CD8-positive, alpha-beta T cell (primary cell): ENCODE measurements at regions of chr21 and their contacts with region 1.

Region 1: DNA sequence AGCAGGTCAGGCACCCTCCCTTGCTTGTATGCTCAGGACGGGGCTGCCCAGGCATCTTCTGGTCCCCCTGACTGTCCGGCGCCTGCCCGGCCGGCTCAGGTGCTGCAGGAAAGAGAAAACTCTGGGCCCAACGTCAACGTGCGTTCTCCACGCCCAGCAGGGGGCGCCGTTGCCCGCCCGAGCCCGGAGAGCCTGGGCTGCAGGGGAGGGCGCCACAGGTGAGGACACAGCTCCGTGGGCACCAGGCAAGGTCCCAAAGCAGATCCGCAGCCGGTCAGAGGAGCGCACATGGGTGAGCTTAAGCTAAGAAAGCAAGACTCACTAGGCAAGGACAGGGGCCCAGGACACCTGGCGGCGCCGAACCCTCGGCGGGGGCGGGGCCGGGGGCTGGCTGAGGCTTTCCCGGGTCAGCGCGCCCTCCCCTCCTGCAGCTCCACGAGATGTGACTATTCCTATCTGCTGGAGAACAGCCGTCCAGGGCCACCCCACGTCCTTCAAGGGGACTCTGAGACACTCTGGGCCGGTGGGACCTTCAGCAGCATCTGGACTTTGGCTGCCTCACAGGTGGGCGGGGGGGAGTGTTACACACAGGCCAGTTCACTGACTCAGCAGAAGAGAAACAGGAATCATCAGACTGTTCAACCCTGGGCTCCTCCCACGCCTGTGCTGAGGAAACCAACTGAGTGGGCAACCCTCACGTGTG is 29.3 kb downstream of the KRTAP10-1 start:
- DNase-seq: peak; percentile 66 to 94 (median 81)
- ATAC-seq: peak; percentile 95
- H3K4me3 ChIP-seq: peak overlapping the region; percentile 41 to 45
- H3K4me3 Mint-ChIP-seq: peak overlapping the region; percentile 60
- H3K27ac ChIP-seq: no peak overlapping the region
- H3K27ac Mint-ChIP-seq: no peak overlapping the region
- H3K4me1 ChIP-seq: peaks cover 11% of the 10 kb centered on the region
- H3K4me1 Mint-ChIP-seq: peaks cover 4% of the 10 kb centered on the region
- H3K27me3 ChIP-seq: no peaks in the 10 kb centered on the region
- H3K27me3 Mint-ChIP-seq: no peaks in the 10 kb centered on the region
- CTCF ChIP-seq: peak; percentile 93

Region 2: GRCh38 chr21:44377201-44377921 is 133.3 kb before region 1 on chr21:
- CTCF ChIA-PET with region 1: no interaction called
- POLR2A ChIA-PET with region 1: no interaction called
- intact Hi-C with region 1: no loop called
- DNase-seq: no peak
- ATAC-seq: no peak
- H3K4me3 ChIP-seq: no peak overlapping the region
- H3K4me3 Mint-ChIP-seq: no peak overlapping the region
- H3K27ac ChIP-seq: no peak overlapping the region
- H3K27ac Mint-ChIP-seq: no peak overlapping the region
- H3K4me1 ChIP-seq: peaks cover 23% of the 10 kb centered on the region
- H3K4me1 Mint-ChIP-seq: peaks cover 24% of the 10 kb centered on the region
- H3K27me3 ChIP-seq: no peaks in the 10 kb centered on the region
- H3K27me3 Mint-ChIP-seq: no peaks in the 10 kb centered on the region
- CTCF ChIP-seq: no peak

Region 3: GRCh38 chr21:44485254-44485793 is 25.3 kb before region 1 on chr21:
- CTCF ChIA-PET with region 1: no interaction called
- POLR2A ChIA-PET with region 1: no interaction called
- intact Hi-C with region 1: no loop called
- DNase-seq: peak in 8 of 9 experiments; percentile 35 to 65 (median 52)
- ATAC-seq: peak; percentile 91
- H3K4me3 ChIP-seq: peak overlapping the region in 1 of 2 experiments; percentile 19
- H3K4me3 Mint-ChIP-seq: peak overlapping the region; percentile 78
- H3K27ac ChIP-seq: no peak overlapping the region
- H3K27ac Mint-ChIP-seq: peak overlapping the region; percentile 69
- H3K4me1 ChIP-seq: peaks cover 7% of the 10 kb centered on the region
- H3K4me1 Mint-ChIP-seq: peaks cover 9% of the 10 kb centered on the region
- H3K27me3 ChIP-seq: no peaks in the 10 kb centered on the region
- H3K27me3 Mint-ChIP-seq: peaks cover 8% of the 10 kb centered on the region
- CTCF ChIP-seq: no peak

Region 4: GRCh38 chr21:44496564-44497550 is 13.8 kb before region 1 on chr21:
- CTCF ChIA-PET with region 1: interaction called, 18 read pairs
- POLR2A ChIA-PET with region 1: no interaction called
- intact Hi-C with region 1: no loop called
- DNase-seq: no peak
- ATAC-seq: no peak
- H3K4me3 ChIP-seq: no peak overlapping the region
- H3K4me3 Mint-ChIP-seq: no peak overlapping the region
- H3K27ac ChIP-seq: no peak overlapping the region
- H3K27ac Mint-ChIP-seq: no peak overlapping the region
- H3K4me1 ChIP-seq: no peaks in the 10 kb centered on the region
- H3K4me1 Mint-ChIP-seq: no peaks in the 10 kb centered on the region
- H3K27me3 ChIP-seq: peaks cover 0 to 5% of the 10 kb centered on the region in 2 experiments
- H3K27me3 Mint-ChIP-seq: peaks cover 7% of the 10 kb centered on the region
- CTCF ChIP-seq: no peak

Region 5: GRCh38 chr21:44568754-44569556 is 58.3 kb after region 1 on chr21:
- CTCF ChIA-PET with region 1: no interaction called
- POLR2A ChIA-PET with region 1: no interaction called
- intact Hi-C with region 1: loop called in 1 of 2 experiments (anchors 10 kb)
- DNase-seq: no peak
- ATAC-seq: no peak
- H3K4me3 ChIP-seq: no peak overlapping the region
- H3K4me3 Mint-ChIP-seq: no peak overlapping the region
- H3K27ac ChIP-seq: no peak overlapping the region
- H3K27ac Mint-ChIP-seq: no peak overlapping the region
- H3K4me1 ChIP-seq: peaks cover 11% of the 10 kb centered on the region
- H3K4me1 Mint-ChIP-seq: peaks cover 12% of the 10 kb centered on the region
- H3K27me3 ChIP-seq: peaks cover 0 to 2% of the 10 kb centered on the region in 2 experiments
- H3K27me3 Mint-ChIP-seq: no peaks in the 10 kb centered on the region
- CTCF ChIP-seq: no peak

Region 6: DNA sequence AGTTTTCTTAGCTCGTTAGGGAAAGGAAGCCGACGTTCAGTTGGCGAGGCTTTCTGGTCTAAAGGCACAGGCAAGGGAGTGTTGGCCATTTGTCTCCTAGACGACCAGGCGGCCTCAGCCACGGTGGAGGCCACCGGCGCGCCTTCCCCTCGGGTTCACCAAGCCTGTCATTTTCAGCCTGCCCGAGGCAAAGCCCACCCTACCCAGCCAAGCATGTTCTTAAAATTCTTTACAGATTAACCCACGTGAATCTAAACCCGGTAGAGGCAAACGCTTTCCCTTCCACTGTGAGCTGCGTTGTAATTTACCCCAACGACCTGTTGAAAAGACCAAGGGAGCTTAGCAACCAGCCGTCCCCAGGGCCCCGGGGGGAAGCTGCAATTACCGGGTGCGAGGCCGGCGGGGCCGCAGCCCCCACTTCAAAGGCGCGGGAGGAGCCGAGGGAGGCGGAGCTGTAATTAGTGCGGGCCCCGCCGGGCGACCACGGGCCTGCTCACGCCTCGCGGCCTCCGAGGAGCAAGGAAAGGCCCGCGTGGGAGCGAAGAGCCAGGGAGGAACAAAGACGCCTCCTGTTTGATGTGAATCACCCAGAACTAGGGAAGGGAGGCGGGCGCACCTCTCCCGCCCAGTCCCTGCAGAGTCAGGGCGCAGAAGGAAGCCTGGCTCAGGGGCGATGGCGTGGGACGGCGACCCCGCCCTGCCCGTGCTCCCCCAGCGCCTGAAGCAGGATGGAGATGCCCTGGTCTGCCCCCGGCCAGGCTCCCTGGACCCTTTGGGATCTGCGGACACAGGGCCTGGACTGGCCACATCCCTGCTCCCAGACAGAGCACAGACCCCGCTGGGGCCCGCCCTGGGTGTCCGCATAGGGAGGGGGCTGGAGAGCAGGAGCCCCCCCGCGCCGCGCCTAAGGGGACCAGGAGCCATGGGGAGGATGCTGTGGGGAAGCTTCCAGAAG is 212.8 kb after region 1 on chr21:
- CTCF ChIA-PET with region 1: interaction called, 13 read pairs
- POLR2A ChIA-PET with region 1: interaction called, 4 read pairs
- intact Hi-C with region 1: no loop called
- DNase-seq: peak in 5 of 9 experiments; percentile 29 to 64 (median 56)
- ATAC-seq: peak; percentile 55
- H3K4me3 ChIP-seq: peak overlapping the region; percentile 25 to 55
- H3K4me3 Mint-ChIP-seq: peak overlapping the region; percentile 78
- H3K27ac ChIP-seq: peak overlapping the region in 1 of 2 experiments; percentile 15
- H3K27ac Mint-ChIP-seq: peak overlapping the region; percentile 32
- H3K4me1 ChIP-seq: peaks cover 19% of the 10 kb centered on the region
- H3K4me1 Mint-ChIP-seq: peaks cover 12% of the 10 kb centered on the region
- H3K27me3 ChIP-seq: peaks cover 0 to 25% of the 10 kb centered on the region in 2 experiments
- H3K27me3 Mint-ChIP-seq: peaks cover 13% of the 10 kb centered on the region
- CTCF ChIP-seq: no peak

Region 7: GRCh38 chr21:44742418-44743153 is 231.9 kb after region 1 on chr21:
- CTCF ChIA-PET with region 1: interaction called, 231 read pairs
- POLR2A ChIA-PET with region 1: interaction called, 5 read pairs
- intact Hi-C with region 1: loop called in 1 of 2 experiments (anchors 1 kb)
- DNase-seq: peak in 2 of 9 experiments; percentile 57 to 67
- ATAC-seq: no peak
- H3K4me3 ChIP-seq: no peak overlapping the region
- H3K4me3 Mint-ChIP-seq: no peak overlapping the region
- H3K27ac ChIP-seq: no peak overlapping the region
- H3K27ac Mint-ChIP-seq: peak overlapping the region; percentile 35
- H3K4me1 ChIP-seq: no peaks in the 10 kb centered on the region
- H3K4me1 Mint-ChIP-seq: peaks cover 6% of the 10 kb centered on the region
- H3K27me3 ChIP-seq: no peaks in the 10 kb centered on the region
- H3K27me3 Mint-ChIP-seq: no peaks in the 10 kb centered on the region
- CTCF ChIP-seq: peak; percentile 41

Region 8: DNA sequence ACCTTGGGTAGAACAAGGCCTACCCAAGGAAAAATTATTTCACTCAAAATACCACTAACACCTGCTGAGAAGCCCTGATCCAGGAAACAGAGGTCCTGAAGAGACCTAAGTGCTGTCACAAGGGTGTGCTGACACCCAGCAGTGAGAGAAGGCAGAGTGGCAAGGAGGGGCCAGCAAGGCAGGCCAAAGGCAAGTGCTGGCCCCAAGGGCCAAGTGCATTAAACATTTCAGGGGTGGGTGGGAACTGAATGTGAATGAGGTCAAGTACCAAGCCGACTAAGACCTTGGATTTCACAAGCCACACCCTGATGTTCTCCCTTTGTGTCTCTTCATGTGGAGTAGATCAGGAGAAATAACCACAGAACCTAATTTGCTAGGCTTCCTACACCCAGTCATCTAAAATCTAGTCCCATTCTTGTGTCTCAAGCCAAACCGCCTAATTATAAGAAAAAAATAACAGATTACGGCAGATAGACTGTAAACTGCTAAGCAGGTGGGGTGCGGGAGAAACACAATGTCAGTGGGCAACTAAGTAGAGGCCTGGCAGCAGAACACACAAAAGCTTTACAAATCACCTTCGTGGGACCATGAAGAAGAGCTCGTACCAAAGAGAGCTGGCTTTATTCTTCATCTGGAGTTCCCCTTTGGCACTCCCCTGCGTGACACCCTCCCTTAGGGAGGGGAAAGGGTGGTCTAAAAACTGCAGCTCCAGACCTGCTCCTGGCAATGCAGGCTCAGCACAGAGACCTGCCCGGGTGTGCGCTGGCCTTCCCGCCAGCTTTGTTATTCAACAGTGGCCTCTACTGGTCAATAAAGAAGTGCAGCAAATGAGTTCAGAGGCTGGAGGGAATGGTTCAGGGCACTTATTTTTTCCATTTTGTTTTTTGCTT is 282.3 kb after region 1 on chr21:
- CTCF ChIA-PET with region 1: interaction called, 118 read pairs
- POLR2A ChIA-PET with region 1: interaction called, 7 read pairs
- intact Hi-C with region 1: loop called in 1 of 2 experiments (anchors 1 kb)
- DNase-seq: peak in 8 of 9 experiments; percentile 29 to 76 (median 54)
- ATAC-seq: peak; percentile 97
- H3K4me3 ChIP-seq: no peak overlapping the region
- H3K4me3 Mint-ChIP-seq: no peak overlapping the region
- H3K27ac ChIP-seq: no peak overlapping the region
- H3K27ac Mint-ChIP-seq: peak overlapping the region; percentile 49
- H3K4me1 ChIP-seq: peaks cover 10% of the 10 kb centered on the region
- H3K4me1 Mint-ChIP-seq: peaks cover 64% of the 10 kb centered on the region
- H3K27me3 ChIP-seq: no peaks in the 10 kb centered on the region
- H3K27me3 Mint-ChIP-seq: no peaks in the 10 kb centered on the region
- CTCF ChIP-seq: peak; percentile 90

Region 9: DNA sequence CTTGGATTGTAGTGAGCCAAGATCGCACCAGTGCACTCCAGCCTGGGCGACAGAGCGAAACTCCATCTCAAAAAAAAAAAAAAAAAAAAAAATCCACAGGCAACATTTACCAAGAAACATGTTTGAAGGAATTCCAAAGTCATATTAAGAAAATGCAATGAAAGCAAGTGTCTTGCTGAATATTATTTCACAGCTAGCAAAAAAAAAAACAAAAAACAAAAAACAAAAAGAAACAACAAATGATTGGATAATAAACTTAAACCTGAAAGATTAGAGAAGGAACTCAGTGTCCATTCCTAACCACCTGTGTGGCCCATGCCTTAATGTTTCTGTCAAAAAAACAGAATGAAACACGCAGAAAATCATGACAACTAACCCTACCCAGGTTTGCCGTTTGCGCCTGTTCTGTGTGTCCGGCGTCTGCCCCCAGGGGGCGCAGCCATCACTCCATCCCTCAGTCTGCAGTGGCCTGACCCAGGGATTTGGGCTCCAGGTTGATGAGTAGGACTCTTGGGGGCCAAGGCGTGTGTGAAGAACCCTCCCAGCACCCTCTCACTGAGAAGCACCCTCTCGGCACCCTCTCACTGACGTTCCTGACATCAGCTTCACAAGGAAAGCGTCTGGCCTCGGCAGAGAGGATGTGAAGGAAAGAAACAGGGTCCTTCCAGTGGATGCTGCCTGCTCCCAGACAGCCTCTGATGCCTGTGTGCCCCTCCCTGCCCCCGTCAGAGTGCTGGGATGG is 382.0 kb after region 1 on chr21:
- CTCF ChIA-PET with region 1: interaction called, 6 read pairs
- POLR2A ChIA-PET with region 1: no interaction called
- intact Hi-C with region 1: loop called in 1 of 2 experiments (anchors 5 kb)
- DNase-seq: peak; percentile 56 to 86 (median 82)
- ATAC-seq: peak; percentile 90
- H3K4me3 ChIP-seq: no peak overlapping the region
- H3K4me3 Mint-ChIP-seq: no peak overlapping the region
- H3K27ac ChIP-seq: peak overlapping the region in 1 of 2 experiments; percentile 34
- H3K27ac Mint-ChIP-seq: peak overlapping the region; percentile 79
- H3K4me1 ChIP-seq: peaks cover 13% of the 10 kb centered on the region
- H3K4me1 Mint-ChIP-seq: peaks cover 15% of the 10 kb centered on the region
- H3K27me3 ChIP-seq: no peaks in the 10 kb centered on the region
- H3K27me3 Mint-ChIP-seq: no peaks in the 10 kb centered on the region
- CTCF ChIP-seq: peak; percentile 96